ENCODE measurements at regions of chr20 and their contacts with region 1.

Region 1: DNA sequence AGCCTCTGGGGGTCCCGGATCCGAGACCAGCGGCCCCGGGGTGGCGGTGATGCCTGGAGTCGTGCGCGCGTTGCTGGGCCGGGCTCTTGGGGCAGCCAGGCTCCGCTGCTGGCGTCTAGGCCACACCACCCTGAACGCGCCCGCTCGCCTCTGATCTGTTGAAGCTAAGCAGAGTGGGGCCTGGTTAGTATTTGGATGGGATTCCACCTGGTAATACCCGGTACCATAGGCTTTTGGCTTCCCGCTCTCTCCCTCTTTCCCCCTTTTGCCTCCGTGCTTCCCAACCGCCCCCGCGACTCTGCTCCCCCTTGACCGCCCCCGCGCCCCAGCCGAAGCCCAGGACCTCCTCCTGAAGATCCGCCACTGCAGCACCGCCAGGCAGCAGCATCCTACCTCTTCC is 1383.5 kb upstream of the DEFB115 start:
- DNase-seq: peak; percentile 81
- H3K4me3 ChIP-seq: no peak overlapping the region
- H3K27ac ChIP-seq: no peak overlapping the region
- H3K4me1 ChIP-seq: no peaks in the 10 kb centered on the region
- H3K27me3 ChIP-seq: peaks cover 0 to 17% (median 0%) of the 10 kb centered on the region in 3 donors
- CTCF ChIP-seq: no peak
- EP300 ChIP-seq: no peak
- POLR2A ChIP-seq: no peak

Region 2: GRCh38 chr20:29119141-29119540 is 754.8 kb before region 1 on chr20:
- intact Hi-C with region 1: loop called (anchors 10 kb)
- DNase-seq: no peak
- H3K4me3 ChIP-seq: no peak overlapping the region
- H3K27ac ChIP-seq: no peak overlapping the region
- H3K4me1 ChIP-seq: no peaks in the 10 kb centered on the region
- H3K27me3 ChIP-seq: no peaks in the 10 kb centered on the region
- CTCF ChIP-seq: no peak
- EP300 ChIP-seq: no peak
- POLR2A ChIP-seq: no peak

Region 3: GRCh38 chr20:29790510-29790909 is 83.4 kb before region 1 on chr20:
- intact Hi-C with region 1: no loop called
- DNase-seq: no peak
- H3K4me3 ChIP-seq: no peak overlapping the region
- H3K27ac ChIP-seq: no peak overlapping the region
- H3K4me1 ChIP-seq: no peaks in the 10 kb centered on the region
- H3K27me3 ChIP-seq: no peaks in the 10 kb centered on the region
- CTCF ChIP-seq: no peak
- EP300 ChIP-seq: no peak
- POLR2A ChIP-seq: no peak